ENCODE measurements at regions of chr19 and their contacts with region 1.

Region 1: DNA sequence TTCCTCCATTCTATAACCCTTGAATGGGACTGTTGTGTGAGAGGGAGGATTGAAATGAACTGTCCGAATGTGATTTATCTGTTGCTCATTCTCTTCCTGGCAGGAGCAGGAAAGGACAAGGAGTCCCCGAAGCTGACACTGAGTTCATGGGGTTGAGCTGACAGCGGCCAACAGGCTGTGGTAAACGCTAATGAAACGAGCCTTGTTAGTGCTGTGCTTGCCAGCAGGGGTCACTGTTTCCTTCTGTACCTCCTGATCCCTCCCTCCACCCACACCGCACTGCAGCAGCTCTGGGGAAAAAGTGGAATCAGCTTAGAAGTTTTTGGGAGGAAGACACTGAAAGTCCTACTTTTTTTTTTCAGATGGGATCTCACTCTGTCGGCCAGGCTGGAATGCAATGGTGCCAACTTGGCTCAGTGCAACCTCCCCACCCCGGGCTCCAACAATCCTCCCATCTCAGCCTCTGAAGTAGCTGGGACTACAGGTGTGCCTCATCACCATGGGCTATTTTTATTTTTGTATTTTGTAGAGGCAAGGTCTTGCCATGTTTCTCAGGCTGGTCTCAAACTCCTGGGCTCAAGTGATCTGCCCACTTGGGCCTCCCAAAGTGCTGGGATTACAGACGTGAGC is 6.7 kb upstream of the ZNF761 start:
- DNase-seq: peak; percentile 46
- H3K4me3 Mint-ChIP-seq: no peak overlapping the region
- H3K27ac Mint-ChIP-seq: no peak overlapping the region
- H3K4me1 Mint-ChIP-seq: peaks cover 5% of the 10 kb centered on the region
- H3K27me3 Mint-ChIP-seq: no peaks in the 10 kb centered on the region

Region 2: DNA sequence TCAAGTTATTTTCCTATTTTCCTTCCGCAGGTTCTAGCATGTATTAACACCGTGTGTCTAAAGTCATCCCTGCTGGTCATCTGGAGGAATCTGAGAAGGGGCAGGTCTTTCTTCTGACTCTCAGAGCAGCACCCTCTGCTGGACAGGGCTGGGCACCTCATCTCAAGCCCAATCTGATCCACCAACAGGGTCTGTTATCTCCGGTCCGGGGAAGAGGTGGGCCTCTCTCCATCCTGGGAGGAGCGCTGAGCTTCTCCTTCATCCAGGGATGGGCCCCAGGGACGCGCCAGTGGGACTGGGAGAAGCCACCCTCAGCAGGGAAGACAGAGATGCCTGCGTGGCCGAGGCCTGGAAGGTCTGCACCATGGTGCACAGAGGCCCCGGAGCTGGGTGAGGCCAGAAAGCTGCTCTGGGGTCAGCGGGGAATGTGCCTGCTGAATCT is 86.9 kb after region 1 on chr19:
- intact Hi-C with region 1: loop called (anchors 1 kb)
- DNase-seq: no peak
- H3K4me3 Mint-ChIP-seq: no peak overlapping the region
- H3K27ac Mint-ChIP-seq: no peak overlapping the region
- H3K4me1 Mint-ChIP-seq: no peaks in the 10 kb centered on the region
- H3K27me3 Mint-ChIP-seq: no peaks in the 10 kb centered on the region